ENCODE measurements at regions of chr20 and their contacts with region 1.

Region 1: DNA sequence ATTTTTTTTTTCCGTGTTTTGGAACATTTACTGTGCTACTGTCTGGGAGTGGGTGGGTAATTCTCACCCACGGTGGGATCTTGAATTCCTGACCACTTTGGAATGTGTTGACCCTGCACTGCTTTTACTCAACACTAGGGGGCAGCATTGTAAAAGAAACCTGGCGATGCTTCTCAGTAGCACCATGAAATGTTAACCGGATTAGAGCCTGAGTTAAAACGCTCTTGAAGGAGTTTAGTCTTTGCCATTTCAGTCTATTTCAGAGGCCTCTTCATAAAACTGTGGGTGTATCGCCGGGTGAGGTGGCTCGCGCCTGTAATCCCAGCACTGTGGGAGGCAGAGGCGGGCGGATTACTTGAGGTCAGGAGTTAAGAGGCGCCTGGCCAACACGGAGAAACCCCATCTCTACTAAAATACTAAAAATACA is 114.4 kb upstream of the PRND start:
- DNase-seq: peak in 8 of 9 donors; percentile 43 to 75 (median 68)
- ATAC-seq: peak; percentile 93
- H3K4me3 ChIP-seq: no peak overlapping the region
- H3K4me3 Mint-ChIP-seq: no peak overlapping the region
- H3K27ac ChIP-seq: no peak overlapping the region
- H3K27ac Mint-ChIP-seq: no peak overlapping the region
- H3K4me1 ChIP-seq: no peaks in the 10 kb centered on the region
- H3K4me1 Mint-ChIP-seq: peaks cover 0 to 8% (median 0%) of the 10 kb centered on the region in 7 donors
- H3K27me3 ChIP-seq: no peaks in the 10 kb centered on the region
- H3K27me3 Mint-ChIP-seq: peaks cover 17 to 31% (median 20%) of the 10 kb centered on the region in 5 donors

Region 2: GRCh38 chr20:4726710-4727397 is 119.6 kb after region 1 on chr20:
- CTCF ChIA-PET with region 1: interaction called, 35 read pairs
- POLR2A ChIA-PET with region 1: no interaction called
- intact Hi-C with region 1: no loop called
- DNase-seq: peak in 7 of 9 donors; percentile 35 to 74 (median 66)
- ATAC-seq: peak; percentile 90
- H3K4me3 ChIP-seq: peak overlapping the region; percentile 29
- H3K4me3 Mint-ChIP-seq: peak overlapping the region; percentile 58 to 80 (median 70)
- H3K27ac ChIP-seq: peak overlapping the region; percentile 62
- H3K27ac Mint-ChIP-seq: peak overlapping the region; percentile 43 to 96 (median 82)
- H3K4me1 ChIP-seq: peaks cover 0 to 7% of the 10 kb centered on the region in 2 donors
- H3K4me1 Mint-ChIP-seq: peaks cover 9 to 22% (median 11%) of the 10 kb centered on the region in 7 donors
- H3K27me3 ChIP-seq: no peaks in the 10 kb centered on the region
- H3K27me3 Mint-ChIP-seq: peaks cover 0 to 7% (median under 1%) of the 10 kb centered on the region in 5 donors

Region 3: DNA sequence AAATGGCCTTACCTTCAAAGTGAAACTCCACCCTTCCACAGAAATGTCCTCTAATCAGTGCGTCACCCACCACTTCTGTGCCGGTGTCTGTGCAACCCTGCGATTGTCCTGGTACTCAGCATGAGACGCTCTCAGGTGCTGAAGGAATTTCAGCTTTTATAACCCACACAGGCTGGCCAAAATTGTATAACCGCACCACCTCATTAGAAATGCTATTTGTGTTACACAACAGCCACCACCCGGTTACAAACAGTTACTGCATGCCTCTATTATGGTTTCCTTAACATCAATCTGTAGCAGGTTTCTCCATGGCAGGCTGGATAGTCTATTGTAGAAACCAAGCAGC is 342.5 kb after region 1 on chr20:
- CTCF ChIA-PET with region 1: no interaction called
- POLR2A ChIA-PET with region 1: no interaction called
- intact Hi-C with region 1: loop called in 1 of 2 experiments (anchors 10 kb)
- DNase-seq: peak in 1 of 9 donors; percentile 8
- ATAC-seq: peak; percentile 73
- H3K4me3 ChIP-seq: no peak overlapping the region
- H3K4me3 Mint-ChIP-seq: peak overlapping the region in 6 of 10 donors; percentile 2 to 36 (median 16)
- H3K27ac ChIP-seq: no peak overlapping the region
- H3K27ac Mint-ChIP-seq: peak overlapping the region in 3 of 9 donors; percentile 3 to 31 (median 14)
- H3K4me1 ChIP-seq: no peaks in the 10 kb centered on the region
- H3K4me1 Mint-ChIP-seq: peaks cover 16 to 36% (median 22%) of the 10 kb centered on the region in 7 donors
- H3K27me3 ChIP-seq: no peaks in the 10 kb centered on the region
- H3K27me3 Mint-ChIP-seq: no peaks in the 10 kb centered on the region

Measured in naive thymus-derived CD4-positive, alpha-beta T cell (primary cell).